ENCODE measurements at regions of chr11 and their contacts with region 1.

Region 1: GRCh38 chr11:83071567-83072349 is at the start of gene RAB30:
- DNase-seq: peak; percentile 94 to 99 (median 96)
- H3K4me3 ChIP-seq: peak within 1 kb of the TSS; percentile 89 to 91
- H3K4me3 Mint-ChIP-seq: no peak within 1 kb of the TSS
- H3K27ac ChIP-seq: peak within 1 kb of the TSS; percentile 97
- H3K27ac Mint-ChIP-seq: no peak within 1 kb of the TSS
- H3K4me1 ChIP-seq: peaks cover 60% of the 10 kb centered on the region
- H3K4me1 Mint-ChIP-seq: peaks cover 6 to 39% (median 24%) of the 10 kb centered on the region in 4 donors
- H3K27me3 ChIP-seq: no peaks in the 10 kb centered on the region
- H3K27me3 Mint-ChIP-seq: no peaks in the 10 kb centered on the region
- total RNA-seq, gene RAB30: 12.3 to 14.1 TPM

Region 2: GRCh38 chr11:82927254-82927880 is 144.4 kb before region 1 on chr11:
- CTCF ChIA-PET with region 1: no interaction called
- POLR2A ChIA-PET with region 1: interaction called, 4 read pairs
- intact Hi-C with region 1: loop called (anchors 2 kb)
- DNase-seq: peak; percentile 50 to 71 (median 65)
- H3K4me3 ChIP-seq: no peak overlapping the region
- H3K4me3 Mint-ChIP-seq: no peak overlapping the region
- H3K27ac ChIP-seq: no peak overlapping the region
- H3K27ac Mint-ChIP-seq: peak overlapping the region in 2 of 7 donors; percentile 2 to 57
- H3K4me1 ChIP-seq: peaks cover 8% of the 10 kb centered on the region
- H3K4me1 Mint-ChIP-seq: peaks cover 16 to 22% (median 18%) of the 10 kb centered on the region in 4 donors
- H3K27me3 ChIP-seq: no peaks in the 10 kb centered on the region
- H3K27me3 Mint-ChIP-seq: no peaks in the 10 kb centered on the region

Region 3: DNA sequence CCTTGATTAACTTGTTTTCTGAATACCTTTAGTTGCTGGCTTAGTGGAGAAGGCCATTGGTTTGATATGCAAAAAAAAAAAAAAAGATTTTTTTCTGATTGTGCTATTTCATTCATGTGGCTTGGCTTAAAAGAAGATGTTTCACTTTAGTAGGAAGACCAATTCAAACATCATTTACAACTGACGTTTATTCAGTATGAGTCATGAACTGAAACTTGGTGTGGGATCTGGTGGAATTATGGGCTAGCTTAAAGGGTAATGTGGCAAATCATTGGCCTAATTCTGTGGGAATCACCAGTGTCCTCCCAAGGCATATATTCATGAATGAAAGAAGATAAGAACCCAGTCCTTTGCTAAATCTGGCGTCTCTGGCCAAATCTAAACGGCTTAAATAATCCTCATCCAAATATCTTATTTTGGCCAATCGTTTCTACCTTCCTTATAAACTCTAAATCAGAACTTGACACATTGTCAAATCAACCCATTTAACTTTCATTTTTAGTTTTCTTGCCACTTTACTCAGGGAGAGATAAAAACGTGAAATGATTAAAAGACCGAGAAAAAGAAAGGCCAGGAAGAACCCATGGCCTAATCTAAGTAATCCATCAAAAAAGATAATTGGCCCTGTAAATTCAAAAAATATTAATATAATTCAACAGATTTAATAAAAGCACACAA is 93.2 kb before region 1 on chr11:
- CTCF ChIA-PET with region 1: no interaction called
- POLR2A ChIA-PET with region 1: no interaction called
- intact Hi-C with region 1: no loop called
- DNase-seq: no peak
- H3K4me3 ChIP-seq: no peak overlapping the region
- H3K4me3 Mint-ChIP-seq: peak overlapping the region in 5 of 8 donors; percentile 4 to 45 (median 5)
- H3K27ac ChIP-seq: no peak overlapping the region
- H3K27ac Mint-ChIP-seq: peak overlapping the region in 2 of 7 donors; percentile 3 to 65
- H3K4me1 ChIP-seq: no peaks in the 10 kb centered on the region
- H3K4me1 Mint-ChIP-seq: peaks cover 10 to 11% (median 11%) of the 10 kb centered on the region in 4 donors
- H3K27me3 ChIP-seq: no peaks in the 10 kb centered on the region
- H3K27me3 Mint-ChIP-seq: no peaks in the 10 kb centered on the region

Region 4: GRCh38 chr11:83087035-83087434 is 15.3 kb after region 1 on chr11:
- CTCF ChIA-PET with region 1: interaction called, 4 read pairs
- POLR2A ChIA-PET with region 1: interaction called, 13 read pairs
- intact Hi-C with region 1: no loop called
- DNase-seq: no peak
- H3K4me3 ChIP-seq: no peak overlapping the region
- H3K4me3 Mint-ChIP-seq: no peak overlapping the region
- H3K27ac ChIP-seq: no peak overlapping the region
- H3K27ac Mint-ChIP-seq: peak overlapping the region in 2 of 7 donors; percentile 32 to 58
- H3K4me1 ChIP-seq: no peaks in the 10 kb centered on the region
- H3K4me1 Mint-ChIP-seq: peaks cover 0 to 13% (median 11%) of the 10 kb centered on the region in 4 donors
- H3K27me3 ChIP-seq: no peaks in the 10 kb centered on the region
- H3K27me3 Mint-ChIP-seq: no peaks in the 10 kb centered on the region

Region 5: DNA sequence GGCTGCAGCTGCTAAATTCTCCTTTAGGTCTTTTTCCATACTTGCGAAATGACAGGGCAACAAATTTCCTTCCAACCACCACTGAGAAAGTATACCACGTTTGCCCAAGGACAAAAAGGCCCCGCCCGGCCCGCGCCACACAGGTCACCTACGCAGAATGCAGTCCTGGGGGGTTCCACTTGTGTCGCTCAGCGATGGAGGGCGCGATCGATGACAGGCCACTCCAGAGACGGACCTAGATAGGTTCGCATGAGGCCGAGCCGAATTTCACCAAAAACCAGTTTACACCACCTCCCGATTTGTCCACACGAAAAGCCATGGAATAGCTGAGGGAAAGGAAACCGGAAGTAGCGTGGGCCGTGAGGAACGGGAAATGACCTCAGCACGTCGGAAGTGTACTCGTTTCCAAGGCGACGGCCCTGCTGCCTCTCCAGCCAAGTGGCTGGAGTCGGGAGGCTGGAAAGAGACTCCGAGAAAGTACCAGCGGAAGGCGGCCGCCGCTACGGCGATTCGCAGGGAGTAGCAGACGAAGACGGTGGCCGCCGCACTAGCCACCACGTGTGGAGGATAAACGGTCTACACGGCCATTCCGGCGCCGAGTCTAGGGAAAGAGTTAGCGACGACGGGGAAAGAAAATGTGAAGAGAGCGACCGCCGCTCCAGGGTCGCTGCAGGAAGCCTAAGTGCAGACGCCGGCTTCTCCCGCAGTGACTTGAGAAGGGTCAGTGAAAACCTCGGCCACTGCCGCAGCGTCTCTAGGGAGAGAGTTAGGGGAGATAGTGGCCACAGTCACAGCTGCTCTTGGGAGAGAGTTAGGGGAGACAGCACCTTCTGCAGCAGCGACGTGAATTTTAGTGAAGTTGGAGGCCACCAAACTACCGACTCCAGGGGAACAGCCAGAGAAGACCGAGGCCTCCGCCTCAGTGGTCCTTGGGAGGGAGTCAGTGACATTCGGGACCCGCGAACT is 121.8 kb after region 1 on chr11 and contains the start of gene ANKRD42:
- CTCF ChIA-PET with region 1: interaction called, 3 read pairs
- POLR2A ChIA-PET with region 1: interaction called, 16 read pairs
- intact Hi-C with region 1: loop called (anchors 1 kb)
- DNase-seq: peak; percentile 88 to 92 (median 90)
- H3K4me3 ChIP-seq: peak within 1 kb of the TSS; percentile 90 to 99
- H3K4me3 Mint-ChIP-seq: peak within 1 kb of the TSS; percentile 98 to 100 (median 99)
- H3K27ac ChIP-seq: peak within 1 kb of the TSS; percentile 99
- H3K27ac Mint-ChIP-seq: peak within 1 kb of the TSS; percentile 99 to 100 (median 100)
- H3K4me1 ChIP-seq: peaks cover 39% of the 10 kb centered on the region
- H3K4me1 Mint-ChIP-seq: peaks cover 35 to 53% (median 41%) of the 10 kb centered on the region in 4 donors
- H3K27me3 ChIP-seq: no peaks in the 10 kb centered on the region
- H3K27me3 Mint-ChIP-seq: no peaks in the 10 kb centered on the region
- total RNA-seq, gene ANKRD42: 8.9 to 12.4 TPM

Measured in CD4-positive, alpha-beta memory T cell (primary cell).